ENCODE measurements at regions of chr3 and their contacts with region 1.

Region 1: GRCh38 chr3:157159762-157160657 is at the start of gene CCNL1:
- DNase-seq: peak; percentile 99
- ATAC-seq: peak; percentile 81
- H3K4me3 ChIP-seq: peak within 1 kb of the TSS; percentile 78 to 100 (median 95)
- H3K4me3 Mint-ChIP-seq: peak within 1 kb of the TSS; percentile 99
- H3K27ac ChIP-seq: peak within 1 kb of the TSS; percentile 99 to 100
- H3K27ac Mint-ChIP-seq: peak within 1 kb of the TSS; percentile 100
- H3K4me1 ChIP-seq: peaks cover 46 to 48% of the 10 kb centered on the region in 2 donors
- H3K4me1 Mint-ChIP-seq: peaks cover 51% of the 10 kb centered on the region
- H3K27me3 ChIP-seq: no peaks in the 10 kb centered on the region
- H3K27me3 Mint-ChIP-seq: no peaks in the 10 kb centered on the region
- CTCF ChIP-seq: no peak
- total RNA-seq, gene CCNL1: 309 and 322 TPM in 2 replicates

Region 2: GRCh38 chr3:155854141-155854940 is 1305.7 kb before region 1 on chr3 and contains the start of gene SLC33A1:
- CTCF ChIA-PET with region 1: no interaction called
- POLR2A ChIA-PET with region 1: no interaction called
- intact Hi-C with region 1: loop called (anchors 1 kb)
- DNase-seq: peak; percentile 100
- ATAC-seq: peak; percentile 90
- H3K4me3 ChIP-seq: peak within 1 kb of the TSS; percentile 82 to 99 (median 92)
- H3K4me3 Mint-ChIP-seq: peak within 1 kb of the TSS; percentile 97
- H3K27ac ChIP-seq: peak within 1 kb of the TSS; percentile 90 to 97
- H3K27ac Mint-ChIP-seq: peak within 1 kb of the TSS; percentile 99
- H3K4me1 ChIP-seq: peaks cover 25 to 37% of the 10 kb centered on the region in 2 donors
- H3K4me1 Mint-ChIP-seq: peaks cover 36% of the 10 kb centered on the region
- H3K27me3 ChIP-seq: no peaks in the 10 kb centered on the region
- H3K27me3 Mint-ChIP-seq: no peaks in the 10 kb centered on the region
- CTCF ChIP-seq: no peak
- total RNA-seq, gene SLC33A1: 26.9 and 29.4 TPM in 2 replicates

Region 3: DNA sequence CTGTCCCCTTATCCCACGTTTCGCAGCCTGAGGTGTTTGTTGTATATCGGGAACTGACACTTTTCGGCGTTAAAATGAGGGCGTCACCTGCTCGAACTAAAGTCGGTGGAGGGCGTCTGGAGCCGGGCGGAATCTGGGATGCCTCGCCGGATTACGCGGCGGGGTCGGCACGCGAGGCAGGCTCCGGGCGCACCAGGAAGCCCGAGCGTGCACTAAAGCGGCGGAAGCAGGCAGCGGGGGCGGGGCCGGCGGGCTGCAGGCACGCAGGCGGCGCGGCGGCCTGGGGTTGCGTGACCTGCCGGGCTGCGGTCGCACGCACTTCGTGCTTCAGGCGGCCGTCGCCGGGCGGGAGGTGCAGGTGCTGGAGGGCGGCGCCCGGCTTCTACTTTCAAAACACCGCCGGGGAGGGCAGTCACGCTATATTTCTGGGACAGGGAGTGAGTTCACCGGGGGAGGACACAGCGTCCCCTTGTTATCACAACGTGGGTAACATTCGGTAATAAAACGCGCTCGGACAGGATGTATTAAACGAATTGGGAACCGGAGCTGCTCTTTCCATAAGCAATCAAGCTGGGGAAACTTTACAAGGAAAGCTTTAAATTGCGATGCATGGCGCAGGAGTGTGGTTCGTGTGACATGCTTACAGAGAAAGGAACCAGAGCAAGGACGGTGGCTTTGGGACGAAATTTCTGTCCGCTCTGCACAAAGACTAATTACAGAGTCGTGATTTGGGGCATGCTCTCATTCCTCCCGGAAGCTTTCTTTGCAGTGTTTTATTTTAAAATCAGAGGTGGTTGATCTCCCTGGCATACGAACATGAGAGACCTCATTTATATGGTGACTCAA is 343.0 kb before region 1 on chr3:
- CTCF ChIA-PET with region 1: no interaction called
- POLR2A ChIA-PET with region 1: interaction called, 7 read pairs
- intact Hi-C with region 1: loop called (anchors 5 kb)
- DNase-seq: peak; percentile 94
- ATAC-seq: peak; percentile 85
- H3K4me3 ChIP-seq: peak overlapping the region; percentile 42 to 86 (median 77)
- H3K4me3 Mint-ChIP-seq: peak overlapping the region; percentile 97
- H3K27ac ChIP-seq: peak overlapping the region; percentile 56 to 80
- H3K27ac Mint-ChIP-seq: peak overlapping the region; percentile 99
- H3K4me1 ChIP-seq: peaks cover 13 to 16% of the 10 kb centered on the region in 2 donors
- H3K4me1 Mint-ChIP-seq: peaks cover 43% of the 10 kb centered on the region
- H3K27me3 ChIP-seq: no peaks in the 10 kb centered on the region
- H3K27me3 Mint-ChIP-seq: no peaks in the 10 kb centered on the region
- CTCF ChIP-seq: no peak

Region 4: GRCh38 chr3:157136647-157137387 is 23.2 kb before region 1 on chr3:
- CTCF ChIA-PET with region 1: interaction called, 8 read pairs
- POLR2A ChIA-PET with region 1: interaction called, 12 read pairs
- intact Hi-C with region 1: no loop called
- DNase-seq: no peak
- ATAC-seq: no peak
- H3K4me3 ChIP-seq: no peak overlapping the region
- H3K4me3 Mint-ChIP-seq: no peak overlapping the region
- H3K27ac ChIP-seq: peak overlapping the region in 1 of 2 donors; percentile 14
- H3K27ac Mint-ChIP-seq: no peak overlapping the region
- H3K4me1 ChIP-seq: peaks cover 4 to 7% of the 10 kb centered on the region in 2 donors
- H3K4me1 Mint-ChIP-seq: peaks cover 6% of the 10 kb centered on the region
- H3K27me3 ChIP-seq: no peaks in the 10 kb centered on the region
- H3K27me3 Mint-ChIP-seq: no peaks in the 10 kb centered on the region
- CTCF ChIP-seq: no peak

Region 5: DNA sequence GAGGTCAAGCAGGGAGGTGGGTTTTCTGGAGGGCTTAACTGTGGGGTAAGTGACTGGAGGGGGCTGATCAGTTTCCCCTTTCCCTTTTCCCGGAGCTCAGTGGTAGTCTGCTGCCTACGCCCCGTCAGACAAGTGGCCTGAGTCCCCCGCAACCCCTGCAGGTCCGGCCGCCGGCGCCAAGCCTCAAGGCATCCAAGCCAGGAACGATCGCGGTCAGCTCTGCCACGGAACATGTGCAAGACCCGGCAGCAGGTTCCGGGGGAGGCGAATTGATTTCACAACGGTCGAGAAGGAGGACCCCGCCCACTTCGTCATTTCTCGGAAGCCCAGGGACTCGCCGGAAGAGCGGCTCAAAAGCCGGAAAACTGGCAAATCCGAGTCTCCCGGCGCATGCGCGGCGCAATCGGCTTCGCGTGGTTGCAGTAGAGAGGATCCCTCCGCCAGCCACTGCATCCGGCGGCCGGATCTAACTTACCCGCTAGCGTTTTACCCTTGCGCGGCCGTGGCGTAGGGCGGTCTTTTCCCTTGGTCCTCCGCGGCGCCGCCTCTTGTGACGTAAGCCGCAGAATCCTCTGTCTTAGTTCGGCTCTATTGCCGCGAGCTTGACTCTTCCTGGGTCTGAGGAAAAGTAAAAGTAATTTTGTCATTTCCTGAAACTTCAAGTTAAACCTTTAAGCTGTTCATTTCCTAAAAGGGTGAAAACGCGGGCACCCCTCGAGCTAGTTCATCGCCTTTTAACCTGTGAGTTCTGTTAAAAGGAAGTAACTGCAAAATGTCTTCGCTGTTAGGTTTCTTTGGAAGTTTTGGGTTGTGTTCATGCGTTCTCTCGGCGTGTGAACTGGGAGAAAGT is 14.9 kb after region 1 on chr3:
- CTCF ChIA-PET with region 1: interaction called, 54 read pairs
- POLR2A ChIA-PET with region 1: interaction called, 168 read pairs
- intact Hi-C with region 1: loop called (anchors 1 kb)
- DNase-seq: peak; percentile 99
- ATAC-seq: peak; percentile 91
- H3K4me3 ChIP-seq: peak overlapping the region; percentile 85 to 98 (median 93)
- H3K4me3 Mint-ChIP-seq: peak overlapping the region; percentile 91
- H3K27ac ChIP-seq: peak overlapping the region; percentile 89 to 97
- H3K27ac Mint-ChIP-seq: peak overlapping the region; percentile 97
- H3K4me1 ChIP-seq: peaks cover 19% of the 10 kb centered on the region in 2 donors
- H3K4me1 Mint-ChIP-seq: peaks cover 23% of the 10 kb centered on the region
- H3K27me3 ChIP-seq: no peaks in the 10 kb centered on the region
- H3K27me3 Mint-ChIP-seq: no peaks in the 10 kb centered on the region
- CTCF ChIP-seq: no peak

Region 6: GRCh38 chr3:157239082-157239704 is 79.2 kb after region 1 on chr3:
- CTCF ChIA-PET with region 1: interaction called, 4 read pairs
- POLR2A ChIA-PET with region 1: no interaction called
- intact Hi-C with region 1: loop called (anchors 1 kb)
- DNase-seq: peak; percentile 73
- ATAC-seq: peak; percentile 90
- H3K4me3 ChIP-seq: no peak overlapping the region
- H3K4me3 Mint-ChIP-seq: no peak overlapping the region
- H3K27ac ChIP-seq: no peak overlapping the region
- H3K27ac Mint-ChIP-seq: no peak overlapping the region
- H3K4me1 ChIP-seq: peaks cover 0 to 5% of the 10 kb centered on the region in 2 donors
- H3K4me1 Mint-ChIP-seq: peaks cover 4% of the 10 kb centered on the region
- H3K27me3 ChIP-seq: no peaks in the 10 kb centered on the region
- H3K27me3 Mint-ChIP-seq: no peaks in the 10 kb centered on the region
- CTCF ChIP-seq: peak; percentile 81

Region 7: GRCh38 chr3:157477441-157477840 is 317.4 kb after region 1 on chr3:
- CTCF ChIA-PET with region 1: no interaction called
- POLR2A ChIA-PET with region 1: no interaction called
- intact Hi-C with region 1: no loop called
- DNase-seq: no peak
- ATAC-seq: no peak
- H3K4me3 ChIP-seq: no peak overlapping the region
- H3K4me3 Mint-ChIP-seq: no peak overlapping the region
- H3K27ac ChIP-seq: no peak overlapping the region
- H3K27ac Mint-ChIP-seq: no peak overlapping the region
- H3K4me1 ChIP-seq: no peaks in the 10 kb centered on the region
- H3K4me1 Mint-ChIP-seq: no peaks in the 10 kb centered on the region
- H3K27me3 ChIP-seq: no peaks in the 10 kb centered on the region
- H3K27me3 Mint-ChIP-seq: peaks cover 10% of the 10 kb centered on the region
- CTCF ChIP-seq: no peak

Region 8: GRCh38 chr3:158644345-158644908 is 1484.4 kb after region 1 on chr3 and contains the start of gene GFM1:
- CTCF ChIA-PET with region 1: interaction called, 4 read pairs
- POLR2A ChIA-PET with region 1: interaction called, 9 read pairs
- intact Hi-C with region 1: loop called (anchors 5 kb)
- DNase-seq: peak; percentile 94
- ATAC-seq: peak; percentile 96
- H3K4me3 ChIP-seq: peak within 1 kb of the TSS; percentile 75 to 96 (median 91)
- H3K4me3 Mint-ChIP-seq: peak within 1 kb of the TSS; percentile 99
- H3K27ac ChIP-seq: peak within 1 kb of the TSS; percentile 63 to 85
- H3K27ac Mint-ChIP-seq: peak within 1 kb of the TSS; percentile 78
- H3K4me1 ChIP-seq: peaks cover 4 to 11% of the 10 kb centered on the region in 2 donors
- H3K4me1 Mint-ChIP-seq: peaks cover 22% of the 10 kb centered on the region
- H3K27me3 ChIP-seq: no peaks in the 10 kb centered on the region
- H3K27me3 Mint-ChIP-seq: no peaks in the 10 kb centered on the region
- CTCF ChIP-seq: peak; percentile 84
- total RNA-seq, gene GFM1: 46.0 and 46.8 TPM in 2 replicates